ENCODE measurements at regions of chr1 and their contacts with region 1.

Region 1: DNA sequence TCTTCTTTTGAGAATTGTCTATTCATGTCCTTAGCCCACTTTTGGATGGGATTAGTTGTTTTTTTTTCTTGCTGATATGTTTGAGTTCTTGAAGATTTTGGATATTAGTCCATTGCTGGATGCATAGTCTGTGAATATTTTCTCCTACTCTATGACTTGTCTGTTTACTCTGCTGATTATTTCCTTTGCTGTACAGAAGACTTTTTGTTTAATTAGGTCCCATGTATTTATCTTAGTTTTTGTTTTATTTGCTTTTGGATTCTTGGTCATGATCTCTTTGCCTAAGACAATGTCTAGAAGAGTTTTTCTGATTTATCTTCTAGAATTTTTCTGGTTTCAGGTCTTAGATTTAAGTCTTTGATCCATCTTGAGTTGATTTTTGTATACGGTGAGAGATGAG is 54.8 kb downstream of the GPR137B start:
- DNase-seq: no peak
- ATAC-seq: no peak
- H3K4me3 ChIP-seq: no peak overlapping the region
- H3K27ac ChIP-seq: no peak overlapping the region
- H3K4me1 ChIP-seq: no peaks in the 10 kb centered on the region
- H3K27me3 ChIP-seq: no peaks in the 10 kb centered on the region
- CTCF ChIP-seq: no peak

Region 2: DNA sequence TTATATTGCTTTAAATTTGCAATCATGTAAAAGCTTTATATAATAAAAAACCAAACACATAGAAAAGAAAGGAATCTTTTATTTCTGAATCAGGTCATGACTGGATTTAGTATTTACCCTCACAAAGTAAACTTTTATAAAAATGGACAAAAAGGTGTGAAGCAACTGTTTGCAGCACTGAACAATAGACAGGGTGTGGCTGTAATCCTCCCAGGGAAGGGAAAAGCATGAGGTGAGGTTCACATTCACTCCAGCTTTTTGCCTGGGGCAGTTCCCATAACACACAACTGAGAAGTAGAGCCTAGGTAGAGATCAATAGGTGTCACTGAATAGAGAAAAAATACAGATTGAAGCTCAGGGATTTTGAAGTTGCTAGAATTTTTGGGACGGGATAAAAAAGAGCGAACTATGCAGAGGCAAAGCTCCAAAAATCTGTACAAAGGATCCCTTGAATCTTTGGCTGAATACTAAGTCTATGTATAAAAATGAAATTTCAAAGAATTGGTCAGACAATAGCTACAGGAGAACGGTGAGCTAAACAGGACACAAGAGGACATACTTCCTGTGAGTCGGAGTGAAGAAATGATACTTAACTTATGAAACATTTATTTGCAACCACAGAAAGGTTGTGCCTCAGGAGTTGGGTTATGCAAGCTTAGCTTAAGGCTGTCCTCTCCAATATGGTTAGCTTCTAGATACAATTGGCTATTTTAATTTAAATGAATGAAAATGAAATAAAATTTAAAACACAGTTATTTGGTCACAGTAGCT is 1855.5 kb after region 1 on chr1:
- intact Hi-C with region 1: loop called in 1 of 2 experiments (anchors 5 kb)
- DNase-seq: no peak
- ATAC-seq: no peak
- H3K4me3 ChIP-seq: no peak overlapping the region
- H3K27ac ChIP-seq: no peak overlapping the region
- H3K4me1 ChIP-seq: no peaks in the 10 kb centered on the region
- H3K27me3 ChIP-seq: no peaks in the 10 kb centered on the region
- CTCF ChIP-seq: no peak

Measured in psoas muscle (tissue), 8 donors.